Activated naive CD4-positive, alpha-beta T cell treated with anti-CD3 and anti-CD28 coated beads, Interleukin-2, amount 10 ng/mL, durations not matched to agents 7 days and 5 days (primary cell): ENCODE measurements at regions of chr5 and their contacts with region 1.

Region 1: GRCh38 chr5:160199410-160199911 is 29.8 kb upstream of the FABP6 start:
- DNase-seq: peak; percentile 74
- H3K4me3 Mint-ChIP-seq: peak overlapping the region; percentile 37
- H3K27ac Mint-ChIP-seq: no peak overlapping the region
- H3K4me1 Mint-ChIP-seq: peaks cover 11% of the 10 kb centered on the region
- H3K27me3 Mint-ChIP-seq: peaks cover 36% of the 10 kb centered on the region

Region 2: GRCh38 chr5:160071516-160071915 is 127.9 kb before region 1 on chr5:
- CTCF ChIA-PET with region 1: no interaction called
- DNase-seq: no peak
- H3K4me3 Mint-ChIP-seq: no peak overlapping the region
- H3K27ac Mint-ChIP-seq: no peak overlapping the region
- H3K4me1 Mint-ChIP-seq: no peaks in the 10 kb centered on the region
- H3K27me3 Mint-ChIP-seq: no peaks in the 10 kb centered on the region

Region 3: DNA sequence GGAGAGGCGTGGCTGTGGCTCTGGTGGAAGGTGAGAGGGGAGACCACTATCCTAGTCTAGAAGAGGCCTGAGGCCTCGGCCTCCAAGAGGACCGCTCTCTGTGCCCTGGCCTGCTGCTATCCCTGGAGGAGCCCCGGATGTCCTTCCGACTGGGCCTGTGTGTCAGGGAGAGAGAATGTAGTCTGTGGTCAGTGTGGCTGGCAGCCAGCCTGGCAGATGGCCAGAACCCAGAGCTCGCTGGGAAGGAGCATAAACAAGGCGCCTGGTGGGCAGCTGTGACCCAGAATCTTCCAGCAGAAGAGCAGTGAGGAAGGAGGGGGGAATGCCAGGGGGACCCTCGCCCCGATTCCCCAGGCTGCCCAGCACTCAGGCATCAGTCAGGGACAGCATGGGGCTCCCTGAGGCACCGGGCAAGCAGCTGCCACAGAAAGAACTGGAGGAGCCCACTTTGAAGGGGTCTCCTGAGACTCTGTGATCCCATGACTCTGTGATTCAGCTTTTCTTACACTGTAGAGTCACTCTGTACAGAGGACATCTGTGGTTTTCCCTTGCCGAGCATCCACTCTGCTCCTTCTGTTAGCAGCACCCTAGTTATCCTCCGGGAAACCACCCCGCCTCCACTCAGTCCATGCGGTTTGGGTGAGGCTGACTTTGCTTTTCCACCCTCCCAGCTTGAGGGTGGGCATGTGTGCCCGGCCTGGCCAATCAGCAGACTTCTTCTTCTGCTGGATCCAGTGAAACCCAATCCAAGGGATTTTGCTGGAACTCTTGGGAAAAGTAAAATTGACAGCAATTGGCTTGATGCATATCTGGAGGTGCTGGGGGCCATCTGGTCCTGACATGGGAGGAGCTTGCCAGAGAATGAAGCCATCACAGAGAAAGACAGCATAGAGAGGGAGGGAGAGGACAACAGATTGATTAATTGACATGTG is 34.1 kb before region 1 on chr5:
- CTCF ChIA-PET with region 1: no interaction called
- DNase-seq: no peak
- H3K4me3 Mint-ChIP-seq: no peak overlapping the region
- H3K27ac Mint-ChIP-seq: no peak overlapping the region
- H3K4me1 Mint-ChIP-seq: peaks cover 4% of the 10 kb centered on the region
- H3K27me3 Mint-ChIP-seq: peaks cover 38% of the 10 kb centered on the region

Region 4: DNA sequence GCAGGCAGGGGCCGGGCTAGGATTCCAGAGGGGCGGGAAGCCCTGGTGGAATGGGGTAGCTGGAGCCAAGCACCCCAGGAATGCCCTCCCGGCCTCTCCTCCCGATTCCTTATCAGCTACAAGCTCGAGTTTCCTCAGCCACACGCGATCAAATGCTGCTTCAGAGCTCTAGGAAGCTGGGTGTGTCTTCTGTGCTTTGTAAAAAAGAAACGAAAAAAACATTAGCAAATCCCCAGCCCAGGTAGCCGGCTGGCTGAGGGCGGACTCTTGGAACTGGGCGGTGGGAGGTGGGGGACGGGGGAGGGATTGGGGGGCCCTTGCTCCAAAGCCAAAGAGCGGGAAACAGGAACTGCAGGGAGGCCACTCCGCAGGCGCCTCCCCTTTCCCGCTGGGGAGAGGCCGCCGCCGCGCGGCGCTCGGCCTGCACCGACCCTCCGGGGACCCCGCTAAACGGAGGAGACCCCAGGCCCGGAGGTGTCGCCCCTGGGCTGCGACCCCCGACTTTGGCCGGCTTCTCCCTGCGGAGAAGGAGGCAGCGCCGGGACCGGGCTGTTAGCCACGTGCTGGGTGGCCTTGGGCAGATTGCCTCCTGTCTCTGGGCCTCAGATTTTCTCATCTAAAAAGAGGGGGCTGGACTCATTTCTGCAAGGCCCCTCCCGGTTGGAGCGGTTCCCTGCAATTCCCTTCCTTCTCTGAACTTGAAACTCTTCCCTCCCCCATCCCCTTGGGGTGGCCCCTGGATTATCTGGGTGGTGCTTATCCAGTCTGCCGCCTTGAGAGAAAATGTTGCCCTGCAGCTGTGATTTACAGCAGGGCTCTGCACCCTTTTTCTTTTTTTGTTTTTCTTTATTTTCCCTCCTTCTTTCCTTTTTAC is 11.1 kb before region 1 on chr5:
- CTCF ChIA-PET with region 1: interaction called, 14 read pairs
- DNase-seq: peak; percentile 24
- H3K4me3 Mint-ChIP-seq: peak overlapping the region; percentile 46
- H3K27ac Mint-ChIP-seq: no peak overlapping the region
- H3K4me1 Mint-ChIP-seq: peaks cover 10% of the 10 kb centered on the region
- H3K27me3 Mint-ChIP-seq: peaks cover 43% of the 10 kb centered on the region